ENCODE measurements at regions of chr9 and their contacts with region 1.

Region 1: GRCh38 chr9:37870799-37871176 is 33.1 kb downstream of the SLC25A51 start:
- DNase-seq: no peak
- ATAC-seq: no peak
- H3K4me3 ChIP-seq: no peak overlapping the region
- H3K27ac ChIP-seq: no peak overlapping the region
- H3K4me1 ChIP-seq: no peaks in the 10 kb centered on the region; the same call in 1 of the 2 replicates
- H3K27me3 ChIP-seq: no peaks in the 10 kb centered on the region
- CTCF ChIP-seq: no peak
- POLR2A ChIP-seq: no peak
- RAD21 ChIP-seq: no peak

Region 2: GRCh38 chr9:37251452-37251851 is 619.3 kb before region 1 on chr9:
- CTCF ChIA-PET with region 1: no interaction called
- POLR2A ChIA-PET with region 1: no interaction called
- dilution Hi-C with region 1: no loop called
- in situ Hi-C with region 1: no loop called
- intact Hi-C with region 1: no loop called
- DNase-seq: no peak
- ATAC-seq: no peak
- H3K4me3 ChIP-seq: no peak overlapping the region
- H3K27ac ChIP-seq: no peak overlapping the region
- H3K4me1 ChIP-seq: no peaks in the 10 kb centered on the region
- H3K27me3 ChIP-seq: no peaks in the 10 kb centered on the region
- CTCF ChIP-seq: no peak
- POLR2A ChIP-seq: no peak
- RAD21 ChIP-seq: no peak

Region 3: DNA sequence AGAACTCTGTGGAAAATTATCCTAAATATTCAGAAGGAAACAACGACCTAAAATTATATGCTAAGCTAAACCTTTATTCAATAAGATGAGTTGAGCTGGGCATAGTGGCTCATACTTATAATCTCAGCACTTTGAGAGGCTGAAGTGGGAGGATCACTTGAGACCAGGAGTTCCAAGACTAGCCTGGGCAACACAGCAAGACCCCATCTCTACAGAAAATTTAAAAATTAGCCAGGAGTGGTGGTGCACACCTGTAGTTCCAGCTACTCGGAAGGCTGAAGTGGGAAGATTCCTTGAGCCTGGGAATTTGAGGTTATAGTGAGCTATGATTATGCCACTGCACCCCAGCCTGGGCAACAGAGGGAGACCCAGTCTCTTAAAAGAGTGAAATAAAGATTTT is 18.6 kb before region 1 on chr9:
- CTCF ChIA-PET with region 1: interaction called, 3 read pairs
- POLR2A ChIA-PET with region 1: interaction called, 10 read pairs
- dilution Hi-C with region 1: no loop called
- in situ Hi-C with region 1: no loop called
- intact Hi-C with region 1: no loop called
- DNase-seq: no peak
- ATAC-seq: no peak
- H3K4me3 ChIP-seq: no peak overlapping the region
- H3K27ac ChIP-seq: no peak overlapping the region
- H3K4me1 ChIP-seq: no peaks in the 10 kb centered on the region
- H3K27me3 ChIP-seq: no peaks in the 10 kb centered on the region
- CTCF ChIP-seq: no peak
- POLR2A ChIP-seq: no peak
- RAD21 ChIP-seq: no peak

Measured in IMR-90 (cell line).